Motor neuron (in vitro differentiated cells): ENCODE measurements at regions of chr9 and their contacts with region 1.

Region 1: DNA sequence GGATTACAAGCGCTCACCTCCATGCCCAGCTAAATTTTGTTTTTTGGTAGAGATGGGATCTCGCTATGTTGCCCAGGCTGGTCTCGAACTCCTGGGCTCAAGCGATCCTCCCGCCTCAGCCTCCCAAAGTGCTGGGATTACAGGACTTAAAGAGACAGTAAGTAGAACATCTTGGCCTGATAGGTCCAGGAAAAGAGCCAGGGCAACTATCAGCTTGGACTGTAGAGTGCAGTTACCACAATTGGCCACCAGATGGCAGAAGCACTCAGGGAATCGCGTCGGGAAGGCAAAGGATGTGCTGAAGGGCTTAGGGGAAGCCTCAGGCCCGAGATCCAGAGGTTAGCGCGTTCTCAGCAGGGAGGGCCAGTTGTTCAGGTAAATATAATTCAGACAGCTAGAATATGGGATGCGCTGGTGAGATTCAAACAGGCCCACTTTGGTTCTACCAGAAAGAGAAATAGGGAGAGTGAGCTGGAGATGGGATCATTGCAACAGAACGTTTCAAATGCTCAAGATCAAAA is 21.5 kb downstream of the C9orf57 start:
- ATAC-seq: peak; percentile 50 to 92 (median 79)
- H3K4me3 ChIP-seq: no peak overlapping the region
- H3K27ac ChIP-seq: no peak overlapping the region
- H3K4me1 ChIP-seq: no peaks in the 10 kb centered on the region

Region 2: DNA sequence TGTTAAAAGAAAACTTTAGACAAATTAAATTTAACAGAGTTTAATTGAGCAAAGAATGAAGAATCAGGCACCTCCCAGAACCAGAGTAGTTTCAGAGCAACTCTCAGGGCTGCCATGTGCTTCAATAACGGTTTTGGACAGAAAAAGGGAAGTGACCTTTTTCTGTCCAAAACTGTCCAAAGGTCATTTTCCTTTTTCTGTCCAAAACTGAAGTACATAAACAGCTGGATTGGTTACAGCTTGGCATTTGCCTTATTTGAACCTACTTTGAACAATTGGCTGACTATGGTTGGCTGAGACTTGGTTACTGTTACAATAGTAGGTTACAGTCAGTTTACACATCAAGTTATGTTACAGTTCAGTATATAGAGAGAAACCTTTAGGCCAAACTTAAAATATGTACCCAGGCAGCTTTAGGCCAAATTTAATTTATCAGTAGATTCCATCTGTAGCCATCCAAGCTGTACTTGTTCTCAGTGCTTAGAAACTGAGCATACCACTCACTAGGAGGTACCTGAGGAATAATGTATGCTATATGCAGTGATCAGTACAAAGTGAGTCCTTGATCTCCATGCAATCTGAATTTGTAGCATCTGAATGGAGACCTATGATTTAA is 83.5 kb before region 1 on chr9:
- in situ Hi-C with region 1: no loop called
- ATAC-seq: no peak
- H3K4me3 ChIP-seq: no peak overlapping the region
- H3K27ac ChIP-seq: no peak overlapping the region
- H3K4me1 ChIP-seq: no peaks in the 10 kb centered on the region

Region 3: DNA sequence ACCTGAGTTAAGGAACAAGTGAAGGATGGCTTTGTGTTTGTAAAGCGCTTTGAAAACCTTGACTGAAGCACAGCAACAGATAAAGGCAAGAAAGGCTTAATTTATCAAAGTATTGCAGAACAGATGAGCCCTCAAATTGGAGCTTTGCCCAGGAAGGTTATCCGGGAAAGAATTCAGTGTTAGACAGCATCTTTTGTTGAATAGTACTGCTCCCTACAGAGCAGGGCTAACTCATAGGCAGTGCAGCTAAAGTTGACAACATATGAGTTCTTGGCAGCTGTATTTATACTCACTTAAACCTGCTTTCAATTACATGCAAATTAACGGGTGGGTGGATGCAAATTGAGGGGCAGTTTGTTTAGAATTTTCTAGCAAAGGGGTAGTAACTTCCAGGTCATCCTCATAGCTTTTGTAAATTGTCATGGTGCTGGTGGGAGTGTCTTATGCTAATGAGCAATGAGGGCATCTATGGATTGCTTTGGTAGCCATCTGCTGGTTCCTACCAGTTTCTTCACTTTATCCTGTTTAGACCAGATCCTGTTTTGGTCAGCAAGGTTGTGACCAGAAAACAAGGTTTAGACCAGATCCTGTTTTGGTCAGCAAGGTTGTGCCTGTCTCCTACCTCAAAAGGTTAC is 216.1 kb after region 1 on chr9:
- in situ Hi-C with region 1: loop called in 2 of 9 experiments (anchors 10 to 25 kb)
- ATAC-seq: peak in 5 of 8 experiments; percentile 52 to 96 (median 95)
- H3K4me3 ChIP-seq: no peak overlapping the region
- H3K27ac ChIP-seq: no peak overlapping the region
- H3K4me1 ChIP-seq: no peaks in the 10 kb centered on the region

Region 4: GRCh38 chr9:72599879-72600534 is 561.1 kb after region 1 on chr9:
- in situ Hi-C with region 1: loop called in 1 of 9 experiments (anchors 25 kb)
- ATAC-seq: no peak
- H3K4me3 ChIP-seq: no peak overlapping the region
- H3K27ac ChIP-seq: no peak overlapping the region
- H3K4me1 ChIP-seq: no peaks in the 10 kb centered on the region

Region 5: GRCh38 chr9:72843520-72844439 is 804.8 kb after region 1 on chr9:
- in situ Hi-C with region 1: loop called in 1 of 9 experiments (anchors 25 kb)
- ATAC-seq: peak in 3 of 8 experiments; percentile 49 to 81 (median 74)
- H3K4me3 ChIP-seq: no peak overlapping the region
- H3K27ac ChIP-seq: no peak overlapping the region
- H3K4me1 ChIP-seq: no peaks in the 10 kb centered on the region